ENCODE measurements at regions of chr10 and their contacts with region 1.

Region 1: DNA sequence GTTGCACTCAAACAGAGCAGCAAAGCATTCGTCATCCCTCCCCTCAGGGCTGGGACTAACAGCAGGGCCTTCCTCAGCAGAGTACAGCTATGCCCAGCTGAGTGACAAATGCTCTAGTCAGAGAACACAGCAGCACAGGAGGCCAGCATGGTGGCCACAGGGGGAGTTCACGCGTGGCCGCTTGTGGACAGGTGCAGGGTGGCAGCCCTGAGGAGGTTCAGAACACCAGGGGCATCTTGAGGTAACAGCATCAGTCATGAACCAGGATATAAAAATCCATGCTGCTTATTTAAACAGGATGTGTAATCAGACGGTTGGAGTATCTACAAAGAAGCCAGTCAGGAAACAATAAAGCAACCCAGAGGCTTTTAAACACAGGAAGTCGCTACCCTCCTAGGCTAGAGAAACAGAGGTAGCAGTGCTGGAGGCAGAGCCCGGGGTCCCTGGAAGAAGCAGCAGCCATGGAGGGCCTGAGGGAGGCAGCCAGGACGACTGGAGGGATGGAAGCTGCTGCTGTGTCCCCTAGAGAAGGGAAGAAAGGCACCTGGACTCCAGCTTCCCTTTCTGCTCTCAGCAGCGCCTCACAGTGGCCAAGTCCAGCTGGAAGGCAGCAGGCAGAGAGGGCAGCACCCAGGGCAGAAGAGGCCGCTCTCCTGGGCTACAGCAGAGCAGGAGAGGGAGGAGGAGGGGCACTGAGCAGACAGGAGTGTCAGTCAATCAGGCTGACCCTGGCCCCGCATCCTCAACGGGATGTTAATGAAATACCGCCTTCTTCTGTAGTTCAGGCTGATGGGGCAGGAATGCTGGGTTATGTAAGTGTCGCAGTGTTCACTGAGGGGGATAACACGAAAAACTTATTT is 70.8 kb upstream of the UCN3 start:
- DNase-seq: peak; percentile 67
- H3K4me3 Mint-ChIP-seq: peak overlapping the region; percentile 83
- H3K27ac Mint-ChIP-seq: peak overlapping the region; percentile 99
- H3K4me1 Mint-ChIP-seq: peaks cover 77% of the 10 kb centered on the region
- H3K27me3 Mint-ChIP-seq: no peaks in the 10 kb centered on the region

Region 2: DNA sequence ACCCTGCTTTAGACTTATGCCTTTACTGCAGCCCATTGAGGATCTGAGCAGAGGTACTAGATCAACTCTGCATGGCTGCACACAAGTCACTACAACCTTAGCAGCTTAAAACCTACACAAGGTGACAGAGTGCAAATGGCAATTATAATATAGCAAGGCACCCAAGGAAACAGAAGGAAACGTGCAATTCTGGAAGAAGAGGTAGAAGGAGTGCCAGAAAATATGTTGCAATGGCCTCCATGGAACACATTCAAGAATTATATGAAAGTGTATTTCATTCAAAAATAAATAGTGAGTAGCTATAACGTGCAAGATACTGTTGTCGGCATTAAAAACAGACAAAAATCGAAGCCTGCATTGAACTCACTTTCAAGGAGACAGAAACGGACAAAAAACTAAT is 106.1 kb before region 1 on chr10:
- CTCF ChIA-PET with region 1: no interaction called
- POLR2A ChIA-PET with region 1: no interaction called
- DNase-seq: no peak
- H3K4me3 Mint-ChIP-seq: no peak overlapping the region
- H3K27ac Mint-ChIP-seq: no peak overlapping the region
- H3K4me1 Mint-ChIP-seq: no peaks in the 10 kb centered on the region
- H3K27me3 Mint-ChIP-seq: peaks cover 4% of the 10 kb centered on the region

Region 3: GRCh38 chr10:5199398-5199797 is 94.5 kb before region 1 on chr10:
- CTCF ChIA-PET with region 1: no interaction called
- POLR2A ChIA-PET with region 1: no interaction called
- DNase-seq: no peak
- H3K4me3 Mint-ChIP-seq: no peak overlapping the region
- H3K27ac Mint-ChIP-seq: no peak overlapping the region
- H3K4me1 Mint-ChIP-seq: no peaks in the 10 kb centered on the region
- H3K27me3 Mint-ChIP-seq: peaks cover 15% of the 10 kb centered on the region

Region 4: DNA sequence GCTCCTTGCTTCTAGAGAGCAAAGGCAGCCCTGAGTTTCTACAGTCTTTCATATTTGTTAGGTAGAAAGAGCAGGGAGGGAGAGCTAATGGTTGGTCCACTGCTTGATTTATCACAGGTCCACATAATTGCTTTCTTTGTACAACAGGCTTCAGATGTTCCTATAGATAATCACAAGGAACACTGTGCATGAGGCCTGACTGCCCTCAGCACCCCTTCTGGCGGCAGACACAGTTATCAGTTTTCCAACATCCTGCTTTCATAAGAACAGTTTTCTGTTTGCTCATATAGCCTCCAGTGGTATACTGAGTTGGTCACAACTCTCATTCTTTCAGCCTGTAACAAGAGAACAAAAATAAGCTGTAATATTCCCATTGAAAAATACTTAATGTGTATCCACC is 27.6 kb before region 1 on chr10:
- CTCF ChIA-PET with region 1: no interaction called
- POLR2A ChIA-PET with region 1: no interaction called
- DNase-seq: no peak
- H3K4me3 Mint-ChIP-seq: no peak overlapping the region
- H3K27ac Mint-ChIP-seq: no peak overlapping the region
- H3K4me1 Mint-ChIP-seq: no peaks in the 10 kb centered on the region
- H3K27me3 Mint-ChIP-seq: peaks cover 2% of the 10 kb centered on the region

Region 5: GRCh38 chr10:5283305-5284158 is 10.4 kb before region 1 on chr10:
- CTCF ChIA-PET with region 1: interaction called, 13 read pairs
- POLR2A ChIA-PET with region 1: no interaction called
- DNase-seq: peak; percentile 72
- H3K4me3 Mint-ChIP-seq: no peak overlapping the region
- H3K27ac Mint-ChIP-seq: peak overlapping the region; percentile 84
- H3K4me1 Mint-ChIP-seq: peaks cover 36% of the 10 kb centered on the region
- H3K27me3 Mint-ChIP-seq: peaks cover 14% of the 10 kb centered on the region

Measured in activated CD4-positive, alpha-beta T cell treated with anti-CD3 and anti-CD28 coated beads, Interleukin-2, amount 10 ng/mL, durations not matched to agents 7 days and 5 days (primary cell).